Right cardiac atrium (tissue), 5 donors: ENCODE measurements at regions of chr7 and their contacts with region 1.

Region 1: GRCh38 chr7:90430614-90431471 is 27.6 kb downstream of the CLDN12 start:
- DNase-seq: no peak
- ATAC-seq: no peak
- H3K4me3 ChIP-seq: no peak overlapping the region
- H3K27ac ChIP-seq: no peak overlapping the region
- H3K4me1 ChIP-seq: no peaks in the 10 kb centered on the region
- H3K27me3 ChIP-seq: no peaks in the 10 kb centered on the region

Region 2: DNA sequence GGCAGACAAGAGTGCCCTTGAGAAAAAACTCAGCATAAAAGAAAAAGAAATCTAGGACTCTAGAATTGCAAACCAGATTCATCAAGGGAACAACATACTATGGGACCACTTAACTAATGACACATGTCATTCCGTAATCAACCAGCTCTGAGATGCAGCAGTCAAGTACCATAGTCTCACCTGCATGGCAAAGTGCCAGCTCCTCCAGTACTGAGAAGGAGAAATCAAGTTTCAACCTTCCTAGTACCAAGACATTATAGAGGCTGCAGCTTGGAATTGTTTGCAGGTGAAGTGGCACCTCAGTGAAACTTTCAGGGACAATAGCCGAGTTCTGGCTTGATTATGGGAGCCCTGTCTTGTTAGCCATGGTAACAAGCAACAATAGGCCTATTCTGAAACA is 265.1 kb before region 1 on chr7:
- intact Hi-C with region 1: loop called in 1 of 4 experiments (anchors 10 kb)
- DNase-seq: no peak
- ATAC-seq: no peak
- H3K4me3 ChIP-seq: no peak overlapping the region
- H3K27ac ChIP-seq: no peak overlapping the region
- H3K4me1 ChIP-seq: no peaks in the 10 kb centered on the region
- H3K27me3 ChIP-seq: no peaks in the 10 kb centered on the region

Region 3: GRCh38 chr7:90298145-90299038 is 132.5 kb before region 1 on chr7:
- intact Hi-C with region 1: loop called in 1 of 4 experiments (anchors 10 kb)
- DNase-seq: no peak
- ATAC-seq: peak; percentile 81 to 84
- H3K4me3 ChIP-seq: no peak overlapping the region
- H3K27ac ChIP-seq: no peak overlapping the region
- H3K4me1 ChIP-seq: no peaks in the 10 kb centered on the region
- H3K27me3 ChIP-seq: no peaks in the 10 kb centered on the region

Region 4: DNA sequence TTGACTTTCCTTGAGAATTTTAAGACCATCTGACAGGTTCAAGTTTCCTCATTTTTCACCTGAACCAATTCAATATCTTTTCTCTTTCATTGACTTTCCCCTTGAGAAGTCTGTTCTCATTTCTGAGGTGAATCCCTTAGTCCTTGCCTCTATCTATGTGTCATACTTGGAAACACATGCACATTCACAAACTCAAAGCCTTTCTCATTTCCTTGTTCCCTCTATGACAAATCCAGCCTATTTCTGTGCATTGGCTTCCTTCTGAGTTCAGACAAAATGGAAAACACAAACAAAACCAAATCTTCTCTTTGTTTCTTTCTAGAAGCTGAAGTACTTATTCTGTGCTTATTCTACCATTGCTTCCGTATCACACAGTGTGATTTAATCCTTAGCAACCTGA is 52.4 kb after region 1 on chr7:
- intact Hi-C with region 1: no loop called
- DNase-seq: no peak
- ATAC-seq: no peak
- H3K4me3 ChIP-seq: no peak overlapping the region
- H3K27ac ChIP-seq: no peak overlapping the region
- H3K4me1 ChIP-seq: no peaks in the 10 kb centered on the region
- H3K27me3 ChIP-seq: no peaks in the 10 kb centered on the region

Region 5: DNA sequence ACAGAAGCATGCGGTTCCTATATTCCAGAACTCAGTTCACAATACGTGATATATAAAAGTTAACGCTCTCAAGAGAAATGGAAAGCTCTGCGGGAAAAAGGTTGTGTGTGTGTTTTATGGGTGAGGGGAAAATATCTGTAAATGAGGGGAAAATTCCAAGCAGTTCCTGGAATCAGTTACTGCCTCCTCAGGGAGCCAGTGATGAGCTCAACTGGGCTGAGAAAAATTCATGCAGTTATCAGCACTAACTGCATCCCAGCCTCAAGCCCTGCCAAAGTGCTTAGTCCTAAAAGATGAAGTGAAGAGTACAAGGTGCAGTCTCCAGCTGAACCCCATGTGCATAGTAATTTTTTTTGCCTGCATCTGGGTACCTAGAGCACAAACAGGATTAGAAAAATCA is 357.2 kb after region 1 on chr7:
- intact Hi-C with region 1: no loop called
- DNase-seq: peak in 1 of 3 donors; percentile 49
- ATAC-seq: peak in 1 of 2 donors; percentile 74
- H3K4me3 ChIP-seq: no peak overlapping the region
- H3K27ac ChIP-seq: no peak overlapping the region
- H3K4me1 ChIP-seq: no peaks in the 10 kb centered on the region
- H3K27me3 ChIP-seq: no peaks in the 10 kb centered on the region